ENCODE measurements at regions of chrX and their contacts with region 1.

Region 1: DNA sequence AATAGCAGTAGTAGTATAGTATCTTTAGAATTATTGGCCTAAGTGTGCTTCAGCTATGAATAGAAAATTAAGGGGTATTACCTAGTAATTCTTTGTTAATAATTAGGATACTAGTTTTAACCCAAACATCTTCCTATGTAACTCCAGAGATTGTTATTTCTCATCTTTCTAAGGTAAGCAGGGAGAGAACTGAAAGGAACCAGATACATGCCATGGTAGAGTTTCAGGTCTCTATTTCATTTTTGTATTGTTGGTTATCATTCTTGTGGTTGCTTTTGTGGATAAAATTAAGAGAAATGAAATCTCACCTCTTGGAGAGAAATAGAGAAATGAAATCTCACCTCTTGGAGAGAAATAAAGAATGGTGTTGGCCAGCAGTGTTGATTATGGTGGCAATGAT is 597.1 kb upstream of the CT83 start:
- DNase-seq: no peak
- H3K4me3 ChIP-seq: no peak overlapping the region
- H3K27ac ChIP-seq: no peak overlapping the region
- H3K4me1 ChIP-seq: no peaks in the 10 kb centered on the region
- H3K27me3 ChIP-seq: no peaks in the 10 kb centered on the region
- CTCF ChIP-seq: no peak
- POLR2A ChIP-seq: no peak

Region 2: GRCh38 chrX:116781926-116782325 is 277.9 kb before region 1 on chrX:
- intact Hi-C with region 1: no loop called
- DNase-seq: no peak
- H3K4me3 ChIP-seq: no peak overlapping the region
- H3K27ac ChIP-seq: no peak overlapping the region
- H3K4me1 ChIP-seq: no peaks in the 10 kb centered on the region
- H3K27me3 ChIP-seq: no peaks in the 10 kb centered on the region
- CTCF ChIP-seq: no peak
- POLR2A ChIP-seq: no peak

Region 3: DNA sequence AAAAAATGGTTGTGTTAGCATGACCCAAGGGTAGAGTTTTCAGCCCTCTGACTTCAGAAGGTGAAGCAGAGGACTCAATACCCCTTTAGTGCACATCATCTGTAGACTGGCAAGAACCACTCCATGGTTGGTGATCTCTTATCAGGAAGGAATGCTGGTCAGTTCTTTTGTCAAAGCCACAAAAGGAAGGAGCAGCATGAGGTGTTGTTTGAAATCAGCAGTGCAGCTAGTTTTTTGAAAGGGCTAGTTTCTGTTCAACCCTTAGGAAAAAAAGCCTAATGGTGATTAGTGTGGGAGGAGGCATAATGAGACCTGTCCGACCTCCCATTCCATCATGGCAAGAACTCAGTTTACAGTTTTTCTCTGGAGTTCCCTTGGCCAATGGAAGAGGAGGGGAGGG is 235.1 kb before region 1 on chrX:
- intact Hi-C with region 1: no loop called
- DNase-seq: no peak
- H3K4me3 ChIP-seq: no peak overlapping the region
- H3K27ac ChIP-seq: no peak overlapping the region
- H3K4me1 ChIP-seq: no peaks in the 10 kb centered on the region
- H3K27me3 ChIP-seq: no peaks in the 10 kb centered on the region
- CTCF ChIP-seq: no peak
- POLR2A ChIP-seq: no peak

Region 4: GRCh38 chrX:117010243-117010642 is 49.6 kb before region 1 on chrX:
- intact Hi-C with region 1: loop called (anchors 10 kb)
- DNase-seq: no peak
- H3K4me3 ChIP-seq: no peak overlapping the region
- H3K27ac ChIP-seq: no peak overlapping the region
- H3K4me1 ChIP-seq: no peaks in the 10 kb centered on the region
- H3K27me3 ChIP-seq: no peaks in the 10 kb centered on the region
- CTCF ChIP-seq: no peak
- POLR2A ChIP-seq: no peak

Region 5: DNA sequence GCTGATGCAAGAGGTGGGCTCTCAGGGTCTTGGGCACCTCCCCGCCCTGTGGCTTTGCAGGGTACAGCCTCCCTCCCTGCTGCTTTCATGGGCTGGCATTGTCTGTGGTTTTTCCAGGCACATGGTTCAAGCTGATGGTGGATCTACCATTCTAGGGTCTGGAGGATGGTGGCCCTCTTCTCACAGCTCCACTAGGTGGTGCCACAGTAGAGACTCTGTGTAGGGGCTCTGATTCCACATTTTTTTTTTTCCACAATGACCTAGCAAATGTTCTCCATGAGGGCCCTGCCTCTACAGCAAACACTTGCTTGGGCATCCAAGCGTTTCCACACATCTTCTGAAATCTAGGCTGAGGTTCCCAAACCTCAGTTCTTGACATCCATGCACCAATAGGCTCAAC is 60.9 kb after region 1 on chrX:
- intact Hi-C with region 1: no loop called
- DNase-seq: no peak
- H3K4me3 ChIP-seq: no peak overlapping the region
- H3K27ac ChIP-seq: no peak overlapping the region
- H3K4me1 ChIP-seq: no peaks in the 10 kb centered on the region
- H3K27me3 ChIP-seq: no peaks in the 10 kb centered on the region
- CTCF ChIP-seq: no peak
- POLR2A ChIP-seq: no peak

Region 6: GRCh38 chrX:117397846-117398245 is 338.0 kb after region 1 on chrX:
- intact Hi-C with region 1: no loop called
- DNase-seq: no peak
- H3K4me3 ChIP-seq: no peak overlapping the region
- H3K27ac ChIP-seq: no peak overlapping the region
- H3K4me1 ChIP-seq: no peaks in the 10 kb centered on the region
- H3K27me3 ChIP-seq: no peaks in the 10 kb centered on the region
- CTCF ChIP-seq: no peak
- POLR2A ChIP-seq: no peak

Measured in thyroid gland (tissue), 4 donors.